PC-9 (cell line): ENCODE measurements at regions of chr18 and their contacts with region 1.

Region 1: DNA sequence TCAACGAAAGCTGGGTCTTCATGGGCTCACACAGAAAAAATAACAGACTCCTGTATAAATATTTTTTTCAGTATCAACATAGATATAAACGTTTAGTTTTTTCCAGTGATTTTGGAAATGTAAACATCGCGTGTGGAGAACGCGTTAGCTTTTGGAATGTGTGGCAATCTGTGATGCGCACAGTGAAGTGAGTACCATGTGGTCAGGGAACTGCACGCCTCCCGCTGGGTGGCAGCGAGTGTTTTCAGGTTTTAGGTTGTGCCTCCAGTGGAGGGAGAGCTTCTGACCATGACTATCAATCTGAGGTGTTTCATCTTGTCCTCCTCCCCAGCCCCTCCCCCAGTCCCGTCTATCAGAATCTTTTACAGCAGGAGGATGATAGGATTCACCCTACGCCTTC is 127.8 kb downstream of the ARHGAP28 start:
- DNase-seq: no peak
- H3K4me3 ChIP-seq: no peak overlapping the region
- H3K27ac ChIP-seq: no peak overlapping the region
- H3K4me1 ChIP-seq: no peaks in the 10 kb centered on the region
- H3K27me3 ChIP-seq: peaks cover 24% of the 10 kb centered on the region
- CTCF ChIP-seq: no peak

Region 2: GRCh38 chr18:6004683-6005082 is 852.6 kb before region 1 on chr18:
- CTCF ChIA-PET with region 1: no interaction called
- POLR2A ChIA-PET with region 1: no interaction called
- intact Hi-C with region 1: no loop called
- DNase-seq: no peak
- H3K4me3 ChIP-seq: no peak overlapping the region
- H3K27ac ChIP-seq: no peak overlapping the region
- H3K4me1 ChIP-seq: no peaks in the 10 kb centered on the region
- H3K27me3 ChIP-seq: peaks cover 47% of the 10 kb centered on the region
- CTCF ChIP-seq: no peak

Region 3: DNA sequence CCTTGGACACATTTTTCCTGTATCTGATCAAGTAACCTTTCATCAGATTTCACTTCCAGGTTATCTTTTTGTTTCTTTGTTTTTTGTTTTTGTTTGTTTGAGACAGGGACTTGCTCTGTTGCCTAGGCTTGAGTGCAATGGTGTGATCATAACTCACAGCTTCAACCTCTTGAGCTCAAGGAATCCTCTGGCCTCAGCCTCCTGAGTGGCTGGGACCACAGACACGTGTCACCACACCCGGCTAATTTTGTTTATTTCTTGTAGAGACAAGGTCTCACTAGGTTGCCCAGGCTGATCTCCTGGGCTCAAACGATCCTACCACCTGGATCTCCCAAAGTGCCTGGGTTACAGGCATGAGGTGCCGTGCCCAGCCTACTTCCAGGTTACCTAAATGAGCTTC is 567.5 kb before region 1 on chr18:
- CTCF ChIA-PET with region 1: no interaction called
- POLR2A ChIA-PET with region 1: interaction called, 10 read pairs
- intact Hi-C with region 1: no loop called
- DNase-seq: no peak
- H3K4me3 ChIP-seq: no peak overlapping the region
- H3K27ac ChIP-seq: no peak overlapping the region
- H3K4me1 ChIP-seq: no peaks in the 10 kb centered on the region
- H3K27me3 ChIP-seq: peaks cover 15% of the 10 kb centered on the region; the same call in 1 of the 2 replicates
- CTCF ChIP-seq: no peak

Region 4: GRCh38 chr18:6835345-6835744 is 22.0 kb before region 1 on chr18:
- CTCF ChIA-PET with region 1: no interaction called
- POLR2A ChIA-PET with region 1: no interaction called
- intact Hi-C with region 1: no loop called
- DNase-seq: no peak
- H3K4me3 ChIP-seq: no peak overlapping the region
- H3K27ac ChIP-seq: no peak overlapping the region
- H3K4me1 ChIP-seq: no peaks in the 10 kb centered on the region
- H3K27me3 ChIP-seq: peaks cover 19% of the 10 kb centered on the region
- CTCF ChIP-seq: no peak